ENCODE measurements at regions of chr1 and their contacts with region 1.

Region 1: GRCh38 chr1:169367486-169368405 is at the starts of genes BLZF1 and NME7:
- DNase-seq: peak; percentile 97
- H3K4me3 ChIP-seq: peak within 1 kb of the TSS; percentile 95
- H3K27ac ChIP-seq: peak within 1 kb of the TSS; percentile 74
- H3K4me1 ChIP-seq: peaks cover 20% of the 10 kb centered on the region
- CTCF ChIP-seq: no peak
- total RNA-seq, gene BLZF1: 4.9 and 7.1 TPM in 2 replicates
- total RNA-seq, gene NME7: 4.2 and 9.3 TPM in 2 replicates

Region 2: DNA sequence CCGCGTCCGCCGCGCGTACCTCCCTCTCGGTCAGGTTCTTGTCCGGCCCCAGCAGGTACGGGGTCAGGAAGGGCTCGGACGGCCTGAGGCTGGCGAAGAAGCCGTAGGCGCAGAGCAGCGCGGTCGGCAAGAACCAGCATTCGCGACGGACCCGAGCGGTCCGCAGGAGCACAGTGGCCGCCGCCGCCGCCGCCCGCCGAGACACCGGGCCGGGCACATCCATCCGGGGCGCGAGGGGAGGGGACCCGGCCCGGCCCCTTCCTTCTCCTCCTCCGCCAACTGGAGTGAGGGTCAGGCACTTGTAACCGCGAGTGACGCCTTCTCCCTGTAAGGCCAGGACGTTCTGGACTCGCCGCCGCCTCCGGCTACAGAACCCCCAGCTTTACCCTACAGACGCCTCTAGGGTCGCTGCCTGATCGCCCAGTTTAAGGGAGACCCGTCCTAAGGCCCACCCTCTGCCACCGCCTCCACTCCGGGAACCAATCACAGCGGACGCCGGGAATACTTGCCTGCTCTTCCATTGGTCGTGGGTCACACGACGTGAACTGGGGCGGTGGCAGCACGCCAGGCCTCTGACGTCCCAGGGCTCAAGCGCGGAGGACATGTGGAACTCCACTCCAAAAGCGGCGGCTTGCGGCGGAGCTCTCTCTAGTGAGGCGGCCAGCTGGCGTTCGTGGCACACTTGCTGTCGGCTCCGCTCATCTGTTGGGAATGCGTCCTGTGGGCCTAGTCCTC is 118.0 kb after region 1 on chr1 and contains the start of gene SLC19A2:
- CTCF ChIA-PET with region 1: no interaction called
- POLR2A ChIA-PET with region 1: no interaction called
- intact Hi-C with region 1: loop called (anchors 5 kb)
- DNase-seq: peak; percentile 96
- H3K4me3 ChIP-seq: peak within 1 kb of the TSS; percentile 76
- H3K27ac ChIP-seq: no peak within 1 kb of the TSS
- H3K4me1 ChIP-seq: peaks cover 10% of the 10 kb centered on the region
- CTCF ChIP-seq: peak; percentile 24
- total RNA-seq, gene SLC19A2: 3.2 TPM in 2 replicates

Measured in OCI-LY7 (cell line).